ENCODE measurements at regions of chr19 and their contacts with region 1.

Region 1: GRCh38 chr19:11380653-11381534 is 3.2 kb downstream of the EPOR start:
- DNase-seq: peak; percentile 95
- ATAC-seq: peak; percentile 82
- H3K4me3 Mint-ChIP-seq: peak overlapping the region; percentile 97
- H3K27ac Mint-ChIP-seq: peak overlapping the region; percentile 100
- H3K4me1 Mint-ChIP-seq: peaks cover 29% of the 10 kb centered on the region
- H3K27me3 Mint-ChIP-seq: peaks cover 20% of the 10 kb centered on the region

Region 2: DNA sequence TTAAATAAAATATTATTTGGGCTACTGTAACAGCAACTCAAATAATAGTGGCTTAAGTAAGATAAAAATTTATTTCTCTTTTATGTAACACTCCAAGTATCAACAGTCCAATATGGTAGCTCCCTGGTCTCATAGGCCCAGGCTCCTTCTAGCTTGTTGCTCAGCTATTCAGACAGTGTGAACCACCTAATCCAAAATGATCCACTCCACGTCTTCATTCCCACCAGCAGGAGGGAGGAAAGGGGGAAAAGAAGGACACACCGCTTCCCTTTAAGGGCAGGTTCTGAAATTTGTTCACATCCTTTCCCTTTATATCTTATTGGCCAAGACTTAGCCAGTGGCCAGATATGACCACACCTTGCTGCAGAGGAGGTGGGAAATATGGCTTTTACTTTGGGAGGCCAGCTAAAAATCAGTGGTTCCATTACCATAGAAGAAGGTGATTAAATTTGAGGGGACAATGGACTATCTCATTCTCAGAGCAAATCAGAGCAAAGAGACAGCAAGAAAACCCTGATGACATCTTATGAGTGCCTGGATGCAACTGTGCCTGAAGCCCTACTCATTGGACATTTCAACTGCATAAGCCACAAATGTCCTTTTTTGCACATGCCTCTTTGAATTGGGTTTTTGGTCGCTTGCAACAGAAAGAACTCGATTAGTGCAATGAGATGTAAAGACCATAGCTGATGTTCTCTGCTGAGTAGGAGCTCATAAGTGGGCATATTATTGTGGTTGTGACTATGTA is 10.2 kb after region 1 on chr19:
- POLR2A ChIA-PET with region 1: interaction called, 11 read pairs
- DNase-seq: no peak
- ATAC-seq: no peak
- H3K4me3 Mint-ChIP-seq: no peak overlapping the region
- H3K27ac Mint-ChIP-seq: no peak overlapping the region
- H3K4me1 Mint-ChIP-seq: peaks cover 11% of the 10 kb centered on the region
- H3K27me3 Mint-ChIP-seq: no peaks in the 10 kb centered on the region

Region 3: DNA sequence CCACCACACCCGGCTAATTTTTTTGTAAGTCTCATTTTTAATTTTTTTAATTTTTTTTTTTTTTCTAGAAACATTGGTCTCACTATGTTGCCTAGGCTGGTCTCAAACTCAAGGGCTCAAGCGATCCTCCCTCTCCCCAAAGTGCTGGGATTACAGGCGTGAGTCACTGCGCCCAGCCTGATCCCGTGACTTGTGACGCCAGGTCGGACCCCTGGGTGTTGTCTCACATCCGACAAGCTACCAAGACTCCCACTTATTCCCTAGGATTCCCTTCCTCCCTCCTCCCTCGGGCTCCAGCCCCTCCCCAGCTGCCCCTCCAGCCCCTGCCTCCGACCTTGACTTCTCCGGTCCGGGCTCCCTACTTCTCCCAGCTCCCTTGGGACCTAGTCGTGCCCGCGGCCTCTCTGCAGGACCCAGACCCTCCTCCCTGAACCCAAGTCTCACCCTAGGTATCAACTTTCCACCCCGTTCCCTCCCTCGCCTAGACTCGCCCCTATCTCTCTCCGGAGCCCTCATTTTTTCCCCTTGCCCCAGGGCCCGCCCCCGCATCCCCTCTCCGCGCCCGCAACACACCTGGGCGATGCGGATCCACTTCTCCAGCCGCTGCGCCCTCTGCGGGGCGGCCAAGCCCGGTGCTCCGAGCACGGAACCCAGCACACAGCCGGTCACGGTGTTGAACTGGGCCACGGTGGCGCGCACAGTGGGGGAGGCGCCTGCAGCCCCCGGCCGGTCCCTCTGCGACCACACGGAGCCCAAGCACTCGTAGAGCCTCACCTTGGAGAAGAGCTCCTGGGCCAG is 25.2 kb after region 1 on chr19:
- POLR2A ChIA-PET with region 1: no interaction called
- DNase-seq: peak; percentile 50
- ATAC-seq: peak; percentile 58
- H3K4me3 Mint-ChIP-seq: no peak overlapping the region
- H3K27ac Mint-ChIP-seq: no peak overlapping the region
- H3K4me1 Mint-ChIP-seq: no peaks in the 10 kb centered on the region
- H3K27me3 Mint-ChIP-seq: peaks cover 22% of the 10 kb centered on the region

Region 4: DNA sequence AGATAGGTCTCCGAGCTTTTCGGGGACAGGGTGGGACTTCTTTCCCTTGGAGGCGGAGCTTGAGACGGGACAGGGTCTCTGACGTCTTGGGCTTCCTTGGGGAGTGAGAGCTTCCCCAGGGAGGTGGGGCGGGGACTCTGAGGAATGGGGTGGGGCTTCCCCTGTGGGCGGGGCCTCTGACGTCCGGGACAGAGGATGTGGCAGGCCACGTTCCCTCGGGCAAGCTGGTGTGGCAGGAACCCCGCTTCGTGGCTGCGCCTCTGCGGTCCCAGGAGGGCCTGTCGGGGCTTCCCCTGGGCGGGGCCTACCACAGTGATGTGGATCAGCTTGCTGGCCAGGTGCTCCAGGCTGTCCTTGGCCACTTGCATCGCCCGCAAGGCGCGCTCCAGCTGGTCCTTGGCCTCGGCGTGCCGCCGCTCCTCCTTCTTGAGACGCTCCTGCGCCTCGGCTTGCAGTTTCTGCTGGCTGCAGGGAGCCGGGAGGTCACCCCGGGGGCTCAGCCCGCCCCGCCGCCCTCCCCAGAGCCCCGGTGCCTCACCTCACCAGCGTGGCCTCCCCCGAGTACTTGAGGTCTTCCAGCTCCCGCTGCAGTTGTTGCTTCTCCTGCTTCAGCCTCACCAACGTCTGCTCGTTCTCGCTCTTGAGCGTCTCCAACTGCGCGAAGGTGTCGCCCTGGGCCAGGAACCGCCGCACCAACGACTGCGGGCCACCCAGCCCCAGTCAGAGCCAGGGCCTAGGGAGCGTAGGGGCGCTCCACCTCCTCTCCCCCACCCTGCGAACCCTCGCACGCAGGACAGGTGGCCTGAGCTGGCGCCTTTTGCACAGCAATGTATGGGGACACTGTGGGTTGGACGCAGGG is 41.5 kb after region 1 on chr19:
- POLR2A ChIA-PET with region 1: interaction called, 15 read pairs
- DNase-seq: peak; percentile 88
- ATAC-seq: peak; percentile 76
- H3K4me3 Mint-ChIP-seq: peak overlapping the region; percentile 80
- H3K27ac Mint-ChIP-seq: no peak overlapping the region
- H3K4me1 Mint-ChIP-seq: peaks cover 34% of the 10 kb centered on the region
- H3K27me3 Mint-ChIP-seq: peaks cover 63% of the 10 kb centered on the region

Region 5: DNA sequence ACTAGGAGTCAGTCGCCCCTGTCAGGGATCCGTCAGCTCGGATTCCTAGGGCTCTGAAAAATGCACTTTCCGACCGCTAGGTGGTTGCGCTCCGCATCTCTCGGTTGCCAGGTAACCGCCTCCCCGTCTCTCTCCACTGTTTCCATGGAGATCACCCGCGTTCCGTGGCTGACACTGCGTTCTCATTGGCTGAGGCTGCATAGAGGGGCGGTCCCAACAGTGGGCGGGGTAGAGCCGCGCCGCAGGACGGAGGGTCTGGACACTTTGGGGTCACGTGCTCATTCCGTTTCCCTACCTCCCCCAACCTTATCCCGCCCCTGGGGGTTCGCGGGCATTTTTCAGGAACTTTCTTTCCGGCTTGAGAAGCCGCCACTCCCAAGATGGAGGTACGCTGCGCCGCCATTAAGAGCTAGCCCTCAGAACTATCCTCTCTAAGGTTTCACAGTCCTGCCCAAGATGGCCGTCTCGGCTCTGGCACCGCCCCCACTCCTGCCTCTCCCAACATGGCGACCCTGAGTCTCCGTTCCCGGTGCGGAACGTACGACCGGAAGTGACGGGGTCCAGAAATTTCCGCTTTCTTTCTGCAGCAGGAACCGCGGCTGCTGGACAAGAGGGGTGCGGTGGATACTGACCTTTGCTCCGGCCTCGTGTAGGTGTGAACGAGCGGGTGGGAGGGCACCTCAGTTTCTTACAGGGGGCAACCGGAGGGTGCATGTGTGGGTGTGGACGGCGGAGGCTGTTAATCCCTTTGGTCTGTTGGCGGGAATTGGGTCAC is 54.4 kb after region 1 on chr19 and contains the starts of genes ODAD3 and PRKCSH:
- POLR2A ChIA-PET with region 1: interaction called, 17 read pairs
- DNase-seq: peak; percentile 96
- ATAC-seq: peak; percentile 97
- H3K4me3 Mint-ChIP-seq: peak within 1 kb of the TSS; percentile 99
- H3K27ac Mint-ChIP-seq: peak within 1 kb of the TSS; percentile 96
- H3K4me1 Mint-ChIP-seq: peaks cover 12% of the 10 kb centered on the region
- H3K27me3 Mint-ChIP-seq: peaks cover 2% of the 10 kb centered on the region
- total RNA-seq, gene ODAD3: not detected
- total RNA-seq, gene PRKCSH: 297 to 310 TPM

Region 6: GRCh38 chr19:11482384-11483050 is 101.6 kb after region 1 on chr19:
- POLR2A ChIA-PET with region 1: interaction called, 18 read pairs
- DNase-seq: peak; percentile 94
- ATAC-seq: peak; percentile 59
- H3K4me3 Mint-ChIP-seq: peak overlapping the region; percentile 74
- H3K27ac Mint-ChIP-seq: peak overlapping the region; percentile 73
- H3K4me1 Mint-ChIP-seq: peaks cover 13% of the 10 kb centered on the region
- H3K27me3 Mint-ChIP-seq: peaks cover 28% of the 10 kb centered on the region